ENCODE measurements at regions of chr14 and their contacts with region 1.

Region 1: GRCh38 chr14:38873941-38874612 is 229.0 kb downstream of the SEC23A start:
- DNase-seq: no peak
- H3K4me3 ChIP-seq: no peak overlapping the region
- H3K27ac ChIP-seq: peak overlapping the region; percentile 8
- H3K4me1 ChIP-seq: peaks cover 13% of the 10 kb centered on the region
- H3K27me3 ChIP-seq: no peaks in the 10 kb centered on the region
- CTCF ChIP-seq: no peak

Region 2: DNA sequence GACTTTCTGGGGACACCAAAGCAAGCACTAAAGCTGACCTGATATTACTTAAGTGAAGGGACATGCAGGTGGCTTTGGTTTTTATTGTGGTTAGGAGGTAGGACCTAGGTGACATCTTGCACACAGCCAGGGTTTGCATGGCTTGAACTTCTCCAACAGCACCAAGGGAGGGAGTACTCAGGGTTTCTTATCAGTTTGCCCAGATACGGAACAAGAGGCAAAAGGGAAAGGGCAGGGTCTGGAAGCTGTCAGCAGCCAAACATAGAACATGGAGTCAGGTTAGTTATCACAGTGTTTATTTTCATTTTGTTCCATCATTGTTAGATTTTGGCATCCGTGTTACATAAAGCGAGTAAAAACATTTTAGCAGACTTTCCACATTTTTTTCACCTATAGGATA is 431.9 kb before region 1 on chr14:
- intact Hi-C with region 1: no loop called
- DNase-seq: no peak
- H3K4me3 ChIP-seq: no peak overlapping the region
- H3K27ac ChIP-seq: no peak overlapping the region
- H3K4me1 ChIP-seq: no peaks in the 10 kb centered on the region
- H3K27me3 ChIP-seq: no peaks in the 10 kb centered on the region
- CTCF ChIP-seq: no peak

Region 3: GRCh38 chr14:38775986-38776385 is 98.1 kb before region 1 on chr14:
- intact Hi-C with region 1: no loop called
- DNase-seq: no peak
- H3K4me3 ChIP-seq: no peak overlapping the region
- H3K27ac ChIP-seq: no peak overlapping the region
- H3K4me1 ChIP-seq: peaks cover 5% of the 10 kb centered on the region
- H3K27me3 ChIP-seq: no peaks in the 10 kb centered on the region
- CTCF ChIP-seq: no peak

Region 4: DNA sequence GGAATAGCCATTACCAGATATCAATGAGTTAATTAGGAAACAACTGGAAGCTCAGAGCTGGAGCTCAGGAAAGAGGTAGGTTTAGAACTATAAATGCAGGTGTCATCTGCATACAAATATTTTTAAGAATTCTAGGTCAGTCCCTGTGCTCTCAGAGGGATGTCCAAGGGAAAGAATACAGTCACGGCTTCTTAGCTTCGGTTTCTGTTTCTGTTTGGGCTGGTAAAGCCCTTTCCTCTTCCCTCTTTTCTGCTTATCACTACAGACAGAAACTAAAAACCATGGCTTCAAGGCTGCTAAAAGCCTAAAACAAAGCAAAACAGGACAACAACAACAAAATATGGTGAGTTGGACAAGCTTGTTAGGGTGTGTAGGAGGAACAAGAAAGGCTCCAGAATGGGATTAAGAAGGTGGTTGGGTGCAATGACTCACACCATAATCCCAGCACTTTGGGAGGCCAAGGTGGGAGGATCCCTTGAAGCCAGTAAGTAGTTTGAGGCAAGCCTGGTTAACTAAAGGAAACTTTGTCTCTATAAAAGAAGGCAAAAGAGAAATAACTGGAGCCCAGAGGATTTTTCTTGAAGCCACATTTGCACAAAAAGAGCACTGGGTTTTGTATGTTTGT is 116.0 kb after region 1 on chr14:
- intact Hi-C with region 1: loop called (anchors 10 kb)
- DNase-seq: no peak
- H3K4me3 ChIP-seq: peak overlapping the region; percentile 9
- H3K27ac ChIP-seq: peak overlapping the region; percentile 65
- H3K4me1 ChIP-seq: peaks cover 40% of the 10 kb centered on the region
- H3K27me3 ChIP-seq: no peaks in the 10 kb centered on the region
- CTCF ChIP-seq: no peak